ENCODE measurements at regions of chr20 and their contacts with region 1.

Region 1: GRCh38 chr20:45011108-45011526 is 44.8 kb downstream of the STK4 start:
- DNase-seq: peak; percentile 74
- H3K4me3 ChIP-seq: no peak overlapping the region
- H3K27ac ChIP-seq: no peak overlapping the region
- H3K4me1 ChIP-seq: no peaks in the 10 kb centered on the region
- H3K27me3 ChIP-seq: no peaks in the 10 kb centered on the region
- CTCF ChIP-seq: peak; percentile 89

Region 2: DNA sequence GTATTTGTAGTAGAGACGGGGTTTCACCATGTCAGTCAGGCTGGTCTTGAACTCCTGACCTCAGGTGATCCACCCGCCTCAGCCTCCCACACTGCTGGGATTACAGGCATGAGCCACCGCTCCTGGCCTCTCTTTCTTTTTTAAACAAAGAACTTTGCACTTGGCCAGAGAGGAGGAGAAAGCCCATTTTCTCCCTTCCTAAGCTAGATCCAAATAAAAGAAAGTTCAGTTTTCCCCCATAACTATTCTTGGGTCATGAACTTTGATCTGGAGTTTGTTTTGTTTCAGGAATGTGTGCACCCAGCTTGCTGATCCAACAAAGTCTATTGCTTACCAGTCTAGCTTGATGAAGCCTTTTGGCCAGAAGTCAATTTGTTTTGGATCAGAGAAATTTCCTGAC is 66.4 kb after region 1 on chr20:
- CTCF ChIA-PET with region 1: no interaction called
- POLR2A ChIA-PET with region 1: no interaction called
- intact Hi-C with region 1: no loop called
- DNase-seq: no peak
- H3K4me3 ChIP-seq: no peak overlapping the region
- H3K27ac ChIP-seq: no peak overlapping the region
- H3K4me1 ChIP-seq: no peaks in the 10 kb centered on the region
- H3K27me3 ChIP-seq: no peaks in the 10 kb centered on the region
- CTCF ChIP-seq: no peak

Region 3: GRCh38 chr20:45090481-45090880 is 79.4 kb after region 1 on chr20:
- CTCF ChIA-PET with region 1: interaction called, 3 read pairs
- POLR2A ChIA-PET with region 1: no interaction called
- intact Hi-C with region 1: loop called (anchors 5 kb)
- DNase-seq: no peak
- H3K4me3 ChIP-seq: no peak overlapping the region
- H3K27ac ChIP-seq: no peak overlapping the region
- H3K4me1 ChIP-seq: no peaks in the 10 kb centered on the region
- H3K27me3 ChIP-seq: no peaks in the 10 kb centered on the region
- CTCF ChIP-seq: no peak

Region 4: DNA sequence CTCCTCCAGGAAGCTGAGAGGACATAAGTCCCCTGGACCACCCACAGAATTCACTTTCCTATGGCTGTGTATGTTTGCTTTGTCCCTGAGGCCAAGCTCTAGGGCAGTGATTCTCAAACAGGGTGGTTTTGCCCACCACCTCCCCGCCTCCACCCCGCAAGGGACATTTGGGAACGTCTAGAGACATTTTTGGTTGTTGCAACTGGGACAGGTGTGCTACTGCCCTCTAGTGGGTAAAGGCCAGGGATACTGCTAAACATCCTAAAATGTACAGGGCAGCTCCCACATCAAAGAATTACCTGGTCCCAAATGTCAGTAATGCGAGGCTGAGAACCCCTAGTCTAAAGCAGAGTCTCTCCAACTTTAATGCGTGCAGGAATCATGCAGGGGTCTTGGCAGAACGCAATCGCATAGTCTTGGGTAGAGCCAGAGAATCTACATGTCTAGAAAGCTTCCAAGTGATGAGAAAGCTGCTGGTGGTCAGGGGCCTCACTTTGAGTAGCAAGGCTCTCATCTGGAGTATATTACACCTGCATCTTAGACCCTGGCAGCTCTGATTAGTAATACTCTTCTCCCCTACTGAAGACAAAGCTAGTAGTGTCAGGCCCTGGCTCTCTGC is 84.7 kb after region 1 on chr20:
- CTCF ChIA-PET with region 1: interaction called, 11 read pairs
- POLR2A ChIA-PET with region 1: interaction called, 7 read pairs
- intact Hi-C with region 1: loop called (anchors 5 kb)
- DNase-seq: peak; percentile 72
- H3K4me3 ChIP-seq: no peak overlapping the region
- H3K27ac ChIP-seq: no peak overlapping the region
- H3K4me1 ChIP-seq: no peaks in the 10 kb centered on the region
- H3K27me3 ChIP-seq: no peaks in the 10 kb centered on the region
- CTCF ChIP-seq: peak; percentile 78

Region 5: DNA sequence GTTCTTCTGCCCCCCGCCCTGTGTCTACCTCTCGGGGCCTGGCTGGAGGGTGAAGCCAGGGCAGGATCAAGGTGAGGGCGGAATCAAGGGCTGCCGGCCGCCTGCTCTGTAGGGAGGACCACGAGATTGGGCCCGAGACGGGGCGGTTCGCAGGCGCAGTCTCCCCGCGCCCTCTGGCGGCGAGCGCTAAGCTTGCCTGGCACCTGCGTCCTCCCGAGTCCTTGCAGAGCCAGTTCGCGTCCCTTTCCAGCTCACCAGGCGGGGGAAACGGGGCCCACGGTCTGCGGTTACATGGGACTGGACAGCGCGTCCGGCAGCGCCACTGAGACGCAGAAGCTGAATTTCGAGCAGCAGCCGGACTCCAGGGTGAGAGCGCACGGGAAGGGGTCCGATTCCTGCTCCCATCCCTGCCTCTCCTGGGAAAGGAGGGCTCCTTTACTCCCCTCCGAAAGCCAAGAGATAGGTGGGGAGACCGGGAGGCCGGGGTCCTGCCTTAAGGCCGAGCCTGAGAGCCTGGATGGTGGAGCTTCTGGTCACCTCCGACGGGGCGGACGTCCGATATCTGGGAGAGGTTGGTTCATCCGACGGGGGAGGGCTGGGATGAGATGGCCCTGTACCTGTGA is 300.6 kb after region 1 on chr20:
- CTCF ChIA-PET with region 1: no interaction called
- POLR2A ChIA-PET with region 1: no interaction called
- intact Hi-C with region 1: loop called (anchors 2 kb)
- DNase-seq: peak; percentile 78
- H3K4me3 ChIP-seq: no peak overlapping the region
- H3K27ac ChIP-seq: no peak overlapping the region
- H3K4me1 ChIP-seq: no peaks in the 10 kb centered on the region
- H3K27me3 ChIP-seq: peaks cover 4% of the 10 kb centered on the region
- CTCF ChIP-seq: peak; percentile 96